SK-N-SH (cell line): ENCODE measurements at regions of chr12 and their contacts with region 1.

Region 1: GRCh38 chr12:117857632-117858612 is 110.9 kb downstream of the KSR2 start:
- DNase-seq: peak; percentile 71
- H3K4me3 ChIP-seq: no peak overlapping the region; a peak in 1 of 4 replicates
- H3K27ac ChIP-seq: no peak overlapping the region
- H3K4me1 ChIP-seq: no peaks in the 10 kb centered on the region
- H3K27me3 ChIP-seq: no peaks in the 10 kb centered on the region
- CTCF ChIP-seq: peak; percentile 59
- EP300 ChIP-seq: no peak
- RAD21 ChIP-seq: no peak; the same call in 1 of the 2 replicates

Region 2: DNA sequence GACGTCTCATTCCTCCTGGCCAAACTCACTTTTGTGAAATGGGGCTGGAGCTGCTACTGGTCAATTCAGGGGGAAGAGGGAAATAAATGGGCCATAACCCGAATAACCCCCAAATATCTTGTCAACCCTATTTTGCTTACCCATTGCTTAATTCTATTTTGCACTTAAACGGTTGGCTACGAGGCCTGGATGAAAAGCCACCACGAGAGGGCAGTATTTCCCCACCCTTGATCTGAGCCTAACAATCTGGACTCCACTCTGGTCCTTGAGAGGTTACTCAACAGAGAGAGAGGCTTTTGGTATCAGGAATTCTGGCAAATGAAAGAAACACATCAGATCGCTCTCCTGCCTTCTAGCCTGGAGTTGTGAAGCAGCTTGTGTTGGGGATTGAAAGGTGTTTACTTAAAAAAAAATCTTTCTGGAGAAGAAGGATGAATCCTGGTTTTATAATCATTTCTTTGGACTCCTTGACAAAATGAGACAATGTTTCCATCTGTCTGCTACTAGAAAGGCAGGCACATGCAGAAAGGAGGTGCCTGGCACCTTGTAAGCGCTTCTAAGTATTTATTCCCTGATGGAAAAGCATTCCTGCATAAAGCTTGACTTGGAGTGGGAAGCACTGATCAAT is 645.2 kb before region 1 on chr12:
- CTCF ChIA-PET with region 1: interaction called, 320 read pairs
- POLR2A ChIA-PET with region 1: no interaction called
- DNase-seq: peak; percentile 83
- H3K4me3 ChIP-seq: peak overlapping the region in 1 of 2 experiments; percentile 35; a peak in 1 of 4 replicates
- H3K27ac ChIP-seq: no peak overlapping the region
- H3K4me1 ChIP-seq: no peaks in the 10 kb centered on the region; a peak in 1 of 4 replicates
- H3K27me3 ChIP-seq: no peaks in the 10 kb centered on the region; the same call in 1 of the 2 replicates
- CTCF ChIP-seq: peak; percentile 96
- EP300 ChIP-seq: no peak
- RAD21 ChIP-seq: peak; percentile 92

Region 3: GRCh38 chr12:117236456-117237001 is 621.4 kb before region 1 on chr12:
- CTCF ChIA-PET with region 1: interaction called, 47 read pairs
- POLR2A ChIA-PET with region 1: no interaction called
- DNase-seq: peak; percentile 70
- H3K4me3 ChIP-seq: no peak overlapping the region; a peak in 1 of 4 replicates
- H3K27ac ChIP-seq: no peak overlapping the region
- H3K4me1 ChIP-seq: no peaks in the 10 kb centered on the region
- H3K27me3 ChIP-seq: no peaks in the 10 kb centered on the region; the same call in 1 of the 2 replicates
- CTCF ChIP-seq: peak; percentile 77
- EP300 ChIP-seq: no peak
- RAD21 ChIP-seq: peak; percentile 80

Region 4: DNA sequence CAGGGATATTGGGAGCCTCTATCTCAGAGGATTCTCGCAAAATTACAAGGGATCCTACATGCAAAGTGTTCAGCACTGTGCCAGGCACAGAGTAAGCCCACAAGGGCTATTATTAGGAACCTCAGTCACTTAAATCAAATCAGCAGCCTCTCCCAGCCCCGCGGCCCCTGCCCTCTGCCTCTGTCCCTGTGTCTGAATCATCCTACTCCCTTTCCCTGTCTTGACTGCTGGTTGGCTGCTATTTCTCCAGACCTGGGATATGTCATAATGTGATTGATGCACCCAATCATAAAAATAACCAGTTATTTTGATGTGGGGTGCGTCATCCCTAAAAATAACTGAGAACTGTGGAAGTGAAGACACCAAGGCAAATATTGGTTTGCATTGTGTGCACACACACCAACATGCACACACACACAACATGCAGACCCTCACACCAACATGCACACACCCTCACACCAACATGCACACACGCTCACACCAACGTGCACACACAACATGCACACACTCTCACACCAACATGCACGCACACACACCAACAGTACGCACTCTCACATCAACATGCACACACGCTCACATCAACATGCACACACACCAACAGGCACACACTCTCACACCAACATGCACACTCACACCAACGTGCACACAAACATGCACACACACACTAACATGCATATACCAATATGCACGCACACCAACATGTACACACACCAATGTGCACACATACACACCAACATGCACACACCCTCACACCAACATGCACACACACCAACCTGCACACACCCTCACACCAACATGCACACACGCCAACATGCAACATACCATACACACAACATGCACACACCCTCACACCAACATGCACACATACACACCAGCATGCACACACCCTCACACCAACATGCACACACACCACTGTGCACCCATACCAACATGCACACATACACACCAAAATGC is 65.2 kb before region 1 on chr12:
- CTCF ChIA-PET with region 1: no interaction called
- POLR2A ChIA-PET with region 1: no interaction called
- DNase-seq: no peak
- H3K4me3 ChIP-seq: no peak overlapping the region
- H3K27ac ChIP-seq: no peak overlapping the region
- H3K4me1 ChIP-seq: no peaks in the 10 kb centered on the region
- H3K27me3 ChIP-seq: no peaks in the 10 kb centered on the region
- CTCF ChIP-seq: no peak
- EP300 ChIP-seq: no peak
- RAD21 ChIP-seq: no peak

Region 5: DNA sequence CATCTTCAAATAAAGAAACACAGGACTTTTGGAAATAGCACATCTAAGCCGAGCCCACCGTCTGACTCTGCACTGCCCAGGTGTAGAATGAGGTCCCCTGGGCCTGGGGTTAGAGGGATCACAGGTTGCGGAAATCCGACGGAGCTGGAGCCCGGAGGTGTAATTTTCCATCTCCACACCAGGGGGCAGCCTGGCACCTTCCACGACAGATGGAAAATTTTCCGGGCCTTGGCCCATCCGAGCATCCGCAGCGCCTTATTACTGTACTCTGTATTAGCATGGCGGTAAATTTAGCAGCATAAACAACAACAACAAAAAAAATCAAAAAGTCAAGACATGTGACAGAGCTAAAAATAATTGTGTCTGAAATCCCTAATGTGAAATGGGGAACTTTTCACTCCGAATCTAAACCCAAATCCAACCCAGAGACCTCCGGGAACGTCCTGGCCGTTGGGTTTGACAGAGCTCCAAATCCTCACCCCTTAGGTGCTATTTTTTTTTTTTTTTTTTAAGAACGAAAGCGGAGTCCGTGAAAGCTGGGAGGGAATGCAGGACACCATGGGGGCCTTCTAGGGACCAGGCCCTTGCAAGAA is 17.0 kb after region 1 on chr12:
- CTCF ChIA-PET with region 1: interaction called, 24 read pairs
- POLR2A ChIA-PET with region 1: no interaction called
- DNase-seq: peak; percentile 82
- H3K4me3 ChIP-seq: no peak overlapping the region
- H3K27ac ChIP-seq: no peak overlapping the region
- H3K4me1 ChIP-seq: no peaks in the 10 kb centered on the region
- H3K27me3 ChIP-seq: no peaks in the 10 kb centered on the region
- CTCF ChIP-seq: peak; percentile 84
- EP300 ChIP-seq: no peak
- RAD21 ChIP-seq: peak; percentile 89

Region 6: GRCh38 chr12:118611295-118611694 is 753.4 kb after region 1 on chr12:
- CTCF ChIA-PET with region 1: no interaction called
- POLR2A ChIA-PET with region 1: no interaction called
- DNase-seq: peak; percentile 16
- H3K4me3 ChIP-seq: no peak overlapping the region
- H3K27ac ChIP-seq: no peak overlapping the region
- H3K4me1 ChIP-seq: no peaks in the 10 kb centered on the region
- H3K27me3 ChIP-seq: no peaks in the 10 kb centered on the region
- CTCF ChIP-seq: no peak
- EP300 ChIP-seq: no peak
- RAD21 ChIP-seq: no peak